ENCODE measurements at regions of chr9 and their contacts with region 1.

Region 1: GRCh38 chr9:693201-694091 is 148.1 kb upstream of the DMRT1 start:
- DNase-seq: peak; percentile 86
- ATAC-seq: peak; percentile 64
- H3K4me3 ChIP-seq: peak overlapping the region; percentile 49; the same call in 1 of the 2 replicates
- H3K27ac ChIP-seq: peak overlapping the region; percentile 95
- H3K4me1 ChIP-seq: peaks cover 34% of the 10 kb centered on the region
- H3K27me3 ChIP-seq: no peaks in the 10 kb centered on the region
- CTCF ChIP-seq: no peak
- POLR2A ChIP-seq: peak; percentile 69
- RAD21 ChIP-seq: no peak

Region 2: GRCh38 chr9:706606-707459 is 13.4 kb after region 1 on chr9:
- CTCF ChIA-PET with region 1: interaction called, 3 read pairs
- POLR2A ChIA-PET with region 1: interaction called, 10 read pairs
- dilution Hi-C with region 1: no loop called
- in situ Hi-C with region 1: no loop called
- intact Hi-C with region 1: loop called (anchors 1 kb)
- DNase-seq: peak; percentile 75
- ATAC-seq: peak; percentile 92
- H3K4me3 ChIP-seq: peak overlapping the region; percentile 58
- H3K27ac ChIP-seq: peak overlapping the region; percentile 98
- H3K4me1 ChIP-seq: peaks cover 8% of the 10 kb centered on the region
- H3K27me3 ChIP-seq: no peaks in the 10 kb centered on the region
- CTCF ChIP-seq: no peak
- POLR2A ChIP-seq: no peak
- RAD21 ChIP-seq: no peak; the same call in 1 of the 2 replicates

Measured in IMR-90 (cell line).